ENCODE measurements at regions of chr14 and their contacts with region 1.

Region 1: GRCh38 chr14:24366721-24367513 is 1.1 kb upstream of the NFATC4 start:
- DNase-seq: peak; percentile 93
- ATAC-seq: peak; percentile 60
- H3K4me3 Mint-ChIP-seq: peak overlapping the region; percentile 90
- H3K27ac Mint-ChIP-seq: peak overlapping the region; percentile 96
- H3K4me1 Mint-ChIP-seq: peaks cover 15% of the 10 kb centered on the region
- H3K27me3 Mint-ChIP-seq: peaks cover 18% of the 10 kb centered on the region
- CTCF ChIP-seq: no peak

Region 2: DNA sequence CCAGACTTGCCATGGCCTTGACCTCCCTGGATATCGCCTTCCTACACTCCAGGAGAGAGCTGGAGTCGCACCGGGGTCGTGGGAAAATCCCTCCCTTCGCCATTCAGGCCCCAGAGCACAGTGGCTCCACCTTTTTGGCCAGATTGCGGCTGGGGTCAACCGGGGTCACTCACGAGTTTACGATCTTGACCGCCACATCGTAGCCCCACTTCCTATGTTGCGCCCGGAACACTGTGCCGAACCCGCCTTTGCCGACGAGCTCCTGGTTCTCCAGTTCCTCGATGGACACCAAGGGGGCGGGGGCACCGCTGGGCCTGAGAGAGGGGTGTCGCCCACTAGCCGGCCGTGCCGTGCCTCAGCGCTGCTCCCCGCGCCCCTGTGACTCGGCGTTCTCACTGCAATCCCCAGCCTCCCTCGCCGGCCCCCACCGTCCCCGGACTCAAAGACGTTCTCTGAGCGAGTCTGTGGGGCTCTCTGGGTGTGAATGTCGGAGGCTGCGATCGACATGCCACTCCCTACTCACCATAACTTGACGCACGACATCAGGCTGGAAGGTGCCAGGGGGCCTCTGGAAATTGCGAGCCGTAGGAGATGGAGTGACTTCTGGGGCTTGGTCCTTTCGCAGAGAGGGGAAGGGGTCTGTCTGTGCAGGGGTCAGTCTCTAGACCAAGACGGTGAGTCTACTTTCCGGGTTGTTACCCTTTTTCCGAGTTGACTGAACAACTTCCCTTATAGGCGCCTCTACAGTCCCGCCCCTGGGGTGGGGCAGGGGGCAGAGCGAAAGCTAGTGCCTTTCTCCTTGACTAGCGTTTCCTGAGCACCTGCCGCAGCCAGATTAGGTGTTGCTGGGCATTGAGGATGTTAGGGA is 27.4 kb before region 1 on chr14 and contains the start of gene RIPK3:
- CTCF ChIA-PET with region 1: interaction called, 43 read pairs
- POLR2A ChIA-PET with region 1: no interaction called
- DNase-seq: peak; percentile 68
- ATAC-seq: peak; percentile 69
- H3K4me3 Mint-ChIP-seq: peak within 1 kb of the TSS; percentile 80
- H3K27ac Mint-ChIP-seq: no peak within 1 kb of the TSS
- H3K4me1 Mint-ChIP-seq: peaks cover 13% of the 10 kb centered on the region
- H3K27me3 Mint-ChIP-seq: peaks cover 95% of the 10 kb centered on the region
- CTCF ChIP-seq: no peak
- total RNA-seq, gene RIPK3: 0.37 to 1.2 TPM (median 0.83 TPM) in 3 replicates

Region 3: DNA sequence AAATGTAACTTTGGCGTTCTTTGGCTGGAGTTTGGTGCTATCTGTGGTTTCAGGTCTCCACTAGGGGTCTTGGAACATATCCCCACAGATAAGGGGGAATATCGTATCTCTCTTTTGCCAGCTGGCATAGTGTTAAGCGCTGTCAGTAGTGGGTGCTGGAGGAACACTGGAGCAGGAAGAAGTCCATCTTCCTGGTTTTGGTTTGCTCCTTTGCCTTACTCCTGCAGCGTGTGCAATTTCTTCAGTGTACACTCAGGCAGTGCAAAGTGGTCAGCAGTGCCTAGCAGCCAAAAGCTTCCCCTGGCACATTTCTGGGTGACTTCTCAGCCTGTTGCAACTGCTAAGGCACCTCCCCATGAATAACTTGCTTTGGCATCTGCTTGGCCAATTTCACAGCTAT is 15.4 kb before region 1 on chr14:
- CTCF ChIA-PET with region 1: interaction called, 21 read pairs
- POLR2A ChIA-PET with region 1: no interaction called
- DNase-seq: no peak
- ATAC-seq: peak; percentile 50
- H3K4me3 Mint-ChIP-seq: no peak overlapping the region
- H3K27ac Mint-ChIP-seq: no peak overlapping the region
- H3K4me1 Mint-ChIP-seq: no peaks in the 10 kb centered on the region
- H3K27me3 Mint-ChIP-seq: peaks cover 84% of the 10 kb centered on the region
- CTCF ChIP-seq: no peak

Region 4: GRCh38 chr14:24398653-24399446 is 31.9 kb after region 1 on chr14 and contains the start of gene NYNRIN:
- CTCF ChIA-PET with region 1: interaction called, 30 read pairs
- POLR2A ChIA-PET with region 1: interaction called, 7 read pairs
- DNase-seq: peak; percentile 70
- ATAC-seq: peak; percentile 83
- H3K4me3 Mint-ChIP-seq: peak within 1 kb of the TSS; percentile 83
- H3K27ac Mint-ChIP-seq: no peak within 1 kb of the TSS
- H3K4me1 Mint-ChIP-seq: peaks cover 53% of the 10 kb centered on the region
- H3K27me3 Mint-ChIP-seq: peaks cover 14% of the 10 kb centered on the region
- CTCF ChIP-seq: no peak
- total RNA-seq, gene NYNRIN: 16.6 to 18.3 TPM (median 17.9 TPM) in 3 replicates

Region 5: DNA sequence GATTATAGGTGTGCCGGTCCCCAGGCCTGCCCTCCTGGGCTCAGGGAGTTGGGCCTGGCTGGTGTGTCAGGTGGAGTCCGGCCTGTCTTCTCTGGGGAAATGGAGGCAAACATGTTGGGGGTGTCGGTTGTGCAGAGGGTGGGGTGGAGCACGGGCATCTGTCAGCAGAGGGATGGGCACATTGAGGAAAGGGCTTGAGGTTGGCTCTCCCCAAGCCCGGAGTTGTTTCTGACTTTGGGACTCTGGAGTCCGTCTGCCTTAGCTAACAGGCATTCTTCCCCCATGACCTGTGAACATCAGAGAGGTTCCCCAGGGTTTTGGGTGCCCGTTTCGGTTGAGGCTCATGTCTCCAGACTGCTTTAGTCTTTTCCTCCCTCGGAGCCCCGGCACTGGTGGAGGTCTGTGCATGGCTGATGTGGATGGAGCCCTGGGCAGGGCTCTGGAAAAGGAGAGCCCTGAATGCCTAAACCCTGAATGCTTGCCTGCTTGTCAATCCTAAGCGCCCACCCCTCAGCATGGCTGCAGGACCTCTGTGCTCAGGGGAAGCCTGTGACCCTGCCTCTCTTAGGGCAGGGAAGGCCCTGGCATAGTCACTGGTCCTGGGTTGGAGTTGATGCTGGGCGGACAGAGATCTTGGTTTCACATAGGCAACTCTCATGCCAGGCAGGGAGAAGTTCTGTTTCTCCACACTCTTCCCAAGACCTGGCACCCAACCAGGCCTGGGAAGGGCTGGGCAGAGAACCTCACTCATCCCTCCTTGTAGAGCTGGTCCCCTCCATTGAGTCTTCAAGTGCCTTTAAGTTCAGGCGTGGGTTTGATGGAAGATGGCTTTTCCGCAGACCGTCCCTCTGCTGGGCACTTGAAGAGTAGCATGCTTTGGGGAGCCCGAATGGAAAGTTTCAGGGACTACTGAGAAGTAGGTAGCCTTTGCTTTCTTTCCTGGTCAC is 44.8 kb after region 1 on chr14:
- CTCF ChIA-PET with region 1: interaction called, 15 read pairs
- POLR2A ChIA-PET with region 1: no interaction called
- DNase-seq: peak; percentile 56
- ATAC-seq: peak; percentile 81
- H3K4me3 Mint-ChIP-seq: no peak overlapping the region
- H3K27ac Mint-ChIP-seq: no peak overlapping the region
- H3K4me1 Mint-ChIP-seq: no peaks in the 10 kb centered on the region
- H3K27me3 Mint-ChIP-seq: no peaks in the 10 kb centered on the region
- CTCF ChIP-seq: peak; percentile 68

Region 6: DNA sequence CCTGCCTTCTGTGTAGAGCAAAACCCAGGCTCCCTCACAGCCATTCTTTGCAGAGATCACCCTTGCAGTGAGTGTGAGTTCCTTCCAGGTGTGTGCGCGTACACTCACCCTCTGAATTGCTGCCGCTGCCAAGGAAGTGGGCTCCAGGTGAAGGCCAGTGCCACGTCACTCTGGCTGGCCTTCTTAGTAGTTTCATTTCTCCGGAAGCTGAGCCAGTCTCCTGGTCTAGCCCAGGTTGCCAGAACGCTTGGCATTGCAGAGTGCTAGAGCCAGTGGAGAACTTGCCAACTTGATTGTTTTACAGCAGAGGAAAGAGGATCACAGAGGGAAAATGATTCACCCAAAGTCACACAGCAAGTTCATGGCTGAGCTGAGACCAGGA is 51.6 kb after region 1 on chr14:
- CTCF ChIA-PET with region 1: interaction called, 17 read pairs
- POLR2A ChIA-PET with region 1: no interaction called
- DNase-seq: no peak
- ATAC-seq: no peak
- H3K4me3 Mint-ChIP-seq: no peak overlapping the region
- H3K27ac Mint-ChIP-seq: no peak overlapping the region
- H3K4me1 Mint-ChIP-seq: no peaks in the 10 kb centered on the region
- H3K27me3 Mint-ChIP-seq: peaks cover 30% of the 10 kb centered on the region
- CTCF ChIP-seq: no peak

Region 7: DNA sequence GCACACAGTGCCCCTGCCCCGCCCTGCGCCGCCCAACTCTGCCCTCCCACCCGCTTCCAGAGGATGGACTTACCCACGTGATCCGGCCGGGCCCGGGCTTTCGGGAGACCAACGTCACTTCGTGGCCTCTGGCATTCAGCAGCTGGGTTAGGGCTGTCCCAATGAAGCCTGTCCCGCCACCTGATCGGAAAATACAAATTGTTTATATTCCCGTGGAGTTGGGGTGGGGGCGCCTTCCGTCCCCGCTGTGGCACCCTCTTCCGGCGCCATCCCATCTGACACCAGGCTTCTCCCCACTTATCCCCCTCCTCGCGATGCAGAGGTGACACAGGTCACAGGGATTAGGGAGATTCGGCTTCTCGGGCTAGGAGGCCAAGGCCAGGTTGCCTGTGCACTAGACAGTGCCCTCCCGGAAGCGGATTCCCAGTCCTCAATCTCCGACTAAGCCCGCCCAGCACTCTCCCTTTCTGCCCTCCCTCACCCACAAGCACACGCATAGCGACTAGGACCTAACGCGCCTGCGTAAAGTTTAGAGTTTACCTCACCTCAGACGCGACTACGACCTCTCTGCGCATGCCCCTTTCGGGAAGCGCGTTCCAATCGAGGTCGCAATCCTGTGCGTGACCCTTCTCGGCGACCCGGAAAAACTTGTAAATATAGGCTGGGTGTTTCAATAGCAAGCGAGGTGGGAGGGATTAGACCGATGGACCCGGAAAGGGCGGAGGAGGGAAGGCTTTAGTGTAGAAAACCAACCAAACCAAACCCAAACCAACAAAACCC is 75.5 kb after region 1 on chr14 and contains the start of gene SDR39U1:
- CTCF ChIA-PET with region 1: interaction called, 49 read pairs
- POLR2A ChIA-PET with region 1: interaction called, 7 read pairs
- DNase-seq: peak; percentile 93
- ATAC-seq: peak; percentile 92
- H3K4me3 Mint-ChIP-seq: peak within 1 kb of the TSS; percentile 88
- H3K27ac Mint-ChIP-seq: peak within 1 kb of the TSS; percentile 99
- H3K4me1 Mint-ChIP-seq: peaks cover 10% of the 10 kb centered on the region
- H3K27me3 Mint-ChIP-seq: no peaks in the 10 kb centered on the region
- CTCF ChIP-seq: no peak
- total RNA-seq, gene SDR39U1: 55.0 to 59.2 TPM (median 56.7 TPM) in 3 replicates

Measured in WTC11 (cell line).